Left lung (tissue), 14 donors: ENCODE measurements at regions of chr1 and their contacts with region 1.

Region 1: GRCh38 chr1:186605762-186606350 is 74.4 kb downstream of the PTGS2 start:
- DNase-seq: peak in 2 of 4 donors; percentile 31 to 45
- ATAC-seq: peak; percentile 92
- H3K4me3 ChIP-seq: no peak overlapping the region
- H3K27ac ChIP-seq: no peak overlapping the region
- H3K4me1 ChIP-seq: no peaks in the 10 kb centered on the region
- H3K27me3 ChIP-seq: no peaks in the 10 kb centered on the region
- CTCF ChIP-seq: peak; percentile 48 to 54

Region 2: DNA sequence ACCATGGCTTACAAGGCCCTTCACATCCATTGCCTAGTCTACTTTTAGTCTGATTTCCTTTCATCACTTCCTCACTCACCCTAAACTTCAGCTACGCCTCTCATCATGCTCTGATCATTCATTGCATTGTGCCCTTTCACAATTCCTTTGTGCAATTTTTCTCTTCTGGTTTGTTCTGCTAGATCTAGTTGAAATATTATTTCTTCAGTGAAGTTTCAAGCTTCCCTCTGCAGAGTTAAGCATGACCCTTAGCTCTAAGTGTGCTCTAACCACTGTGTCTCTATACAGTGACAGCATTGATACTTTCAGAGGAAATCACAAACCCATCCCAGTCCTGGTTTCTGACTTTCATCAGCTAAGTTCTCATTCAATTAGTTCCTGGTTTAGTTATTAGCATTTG is 389.0 kb after region 1 on chr1:
- intact Hi-C with region 1: loop called in 1 of 2 experiments (anchors 10 kb)
- DNase-seq: no peak
- ATAC-seq: no peak
- H3K4me3 ChIP-seq: no peak overlapping the region
- H3K27ac ChIP-seq: peak overlapping the region in 1 of 2 donors; percentile 14
- H3K4me1 ChIP-seq: peaks cover 0 to 7% of the 10 kb centered on the region in 2 donors
- H3K27me3 ChIP-seq: no peaks in the 10 kb centered on the region
- CTCF ChIP-seq: no peak